ENCODE measurements at regions of chr16 and their contacts with region 1.

Region 1: DNA sequence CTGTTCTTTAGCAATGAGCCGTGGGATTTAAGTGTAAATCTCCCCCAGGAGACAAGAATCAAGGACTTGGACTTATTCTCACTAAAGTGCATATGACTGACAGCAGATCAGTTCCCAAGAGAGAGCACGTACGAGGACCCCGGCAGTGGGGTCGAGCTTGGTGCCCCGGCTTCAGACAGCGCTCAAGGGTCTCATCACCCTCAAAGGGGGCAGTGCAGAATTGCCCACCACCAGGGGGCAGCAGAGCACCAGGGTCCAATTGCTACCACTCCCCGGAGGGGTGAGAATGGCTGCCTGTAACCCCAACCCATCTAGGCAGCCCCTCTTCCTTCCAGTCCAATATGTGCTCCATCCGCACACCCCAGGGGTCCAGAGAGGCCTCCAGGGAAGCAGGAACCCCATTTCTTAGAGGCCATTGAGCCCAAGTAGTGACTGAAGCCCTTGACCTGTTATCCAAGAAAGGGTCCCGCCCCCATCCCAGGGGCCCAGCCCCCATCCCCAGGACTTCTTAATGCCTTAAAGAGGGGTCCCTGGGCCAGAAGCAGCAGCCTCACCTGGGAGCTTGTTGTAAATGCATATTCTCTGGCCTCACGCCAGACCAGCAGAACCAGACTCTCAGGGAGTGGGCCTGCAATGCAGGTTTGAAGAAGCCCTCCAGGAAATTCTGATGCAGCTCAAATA is 86.1 kb downstream of the ZDHHC7 start:
- DNase-seq: peak; percentile 74
- ATAC-seq: no peak

Region 2: GRCh38 chr16:84832488-84833143 is 92.6 kb before region 1 on chr16:
- intact Hi-C with region 1: loop called (anchors 5 kb)
- DNase-seq: peak; percentile 92
- ATAC-seq: peak; percentile 87

Region 3: GRCh38 chr16:84952335-84953189 is 27.3 kb after region 1 on chr16:
- intact Hi-C with region 1: loop called (anchors 1 kb)
- DNase-seq: peak; percentile 76
- ATAC-seq: peak; percentile 94

Region 4: GRCh38 chr16:84970447-84971127 is 45.4 kb after region 1 on chr16:
- intact Hi-C with region 1: loop called (anchors 1 kb)
- DNase-seq: peak; percentile 94
- ATAC-seq: peak; percentile 78